ENCODE measurements at regions of chr7 and their contacts with region 1.

Region 1: DNA sequence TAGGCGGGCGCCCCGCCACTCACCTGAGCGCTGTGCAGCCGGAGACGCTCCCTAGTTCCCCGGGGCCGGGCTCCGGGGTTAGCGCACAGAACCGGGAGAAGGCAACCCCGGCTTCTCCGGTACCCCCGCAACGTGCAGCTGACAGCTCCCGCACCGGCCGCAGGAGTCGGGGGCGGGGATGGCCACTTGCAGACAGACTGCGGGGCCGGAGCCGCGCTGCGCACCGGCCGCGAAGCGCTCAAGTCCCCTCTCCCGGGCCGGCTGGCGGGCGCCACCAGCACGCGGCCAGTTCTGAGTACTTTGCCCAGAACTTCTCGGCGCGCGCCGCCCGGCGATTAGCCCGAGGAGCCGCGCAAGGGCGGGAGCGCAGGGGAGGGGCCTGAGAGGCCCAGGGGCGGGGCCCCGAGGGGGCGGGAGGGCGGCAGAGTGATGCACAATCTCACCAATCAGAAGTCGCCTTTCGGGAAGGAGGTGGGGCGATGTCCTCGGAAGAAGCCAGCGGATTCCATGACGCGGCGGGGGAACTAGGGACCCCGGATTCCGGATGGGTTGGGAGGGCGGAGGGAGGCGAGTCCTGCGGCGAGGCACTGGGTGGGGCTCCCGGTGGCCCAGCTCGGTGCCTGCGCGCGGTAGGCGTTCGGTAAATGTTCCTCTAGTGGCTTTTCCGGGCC is at the start of gene OSBPL3:
- DNase-seq: peak; percentile 96
- ATAC-seq: peak; percentile 89
- H3K4me3 ChIP-seq: peak within 1 kb of the TSS; percentile 73 to 97 (median 87)
- H3K4me3 Mint-ChIP-seq: peak within 1 kb of the TSS; percentile 95
- H3K27ac ChIP-seq: peak within 1 kb of the TSS; percentile 55 to 78
- H3K27ac Mint-ChIP-seq: peak within 1 kb of the TSS; percentile 96
- H3K4me1 ChIP-seq: peaks cover 17 to 27% of the 10 kb centered on the region in 2 donors
- H3K4me1 Mint-ChIP-seq: peaks cover 52% of the 10 kb centered on the region
- H3K27me3 ChIP-seq: no peaks in the 10 kb centered on the region
- H3K27me3 Mint-ChIP-seq: no peaks in the 10 kb centered on the region
- CTCF ChIP-seq: no peak
- total RNA-seq, gene OSBPL3: 67.6 and 80.6 TPM in 2 replicates

Region 2: GRCh38 chr7:24715661-24716479 is 264.1 kb before region 1 on chr7:
- CTCF ChIA-PET with region 1: no interaction called
- POLR2A ChIA-PET with region 1: no interaction called
- intact Hi-C with region 1: loop called (anchors 1 kb)
- DNase-seq: peak; percentile 56
- ATAC-seq: no peak
- H3K4me3 ChIP-seq: peak overlapping the region in 1 of 5 experiments; percentile 9
- H3K4me3 Mint-ChIP-seq: peak overlapping the region; percentile 68
- H3K27ac ChIP-seq: no peak overlapping the region
- H3K27ac Mint-ChIP-seq: no peak overlapping the region
- H3K4me1 ChIP-seq: peaks cover 52 to 55% of the 10 kb centered on the region in 2 donors
- H3K4me1 Mint-ChIP-seq: peaks cover 61% of the 10 kb centered on the region
- H3K27me3 ChIP-seq: no peaks in the 10 kb centered on the region
- H3K27me3 Mint-ChIP-seq: no peaks in the 10 kb centered on the region
- CTCF ChIP-seq: peak; percentile 56

Region 3: GRCh38 chr7:24842449-24843241 is 137.4 kb before region 1 on chr7:
- CTCF ChIA-PET with region 1: interaction called, 6 read pairs
- POLR2A ChIA-PET with region 1: interaction called, 12 read pairs
- intact Hi-C with region 1: no loop called
- DNase-seq: peak; percentile 72
- ATAC-seq: peak; percentile 78
- H3K4me3 ChIP-seq: peak overlapping the region in 1 of 5 experiments; percentile 15
- H3K4me3 Mint-ChIP-seq: peak overlapping the region; percentile 59
- H3K27ac ChIP-seq: peak overlapping the region; percentile 68 to 90
- H3K27ac Mint-ChIP-seq: peak overlapping the region; percentile 85
- H3K4me1 ChIP-seq: peaks cover 55 to 58% of the 10 kb centered on the region in 2 donors
- H3K4me1 Mint-ChIP-seq: peaks cover 53% of the 10 kb centered on the region
- H3K27me3 ChIP-seq: no peaks in the 10 kb centered on the region
- H3K27me3 Mint-ChIP-seq: no peaks in the 10 kb centered on the region
- CTCF ChIP-seq: no peak

Region 4: GRCh38 chr7:24911213-24911603 is 68.8 kb before region 1 on chr7:
- CTCF ChIA-PET with region 1: interaction called, 4 read pairs
- POLR2A ChIA-PET with region 1: no interaction called
- intact Hi-C with region 1: loop called (anchors 2 kb)
- DNase-seq: peak; percentile 40
- ATAC-seq: peak; percentile 69
- H3K4me3 ChIP-seq: peak overlapping the region in 1 of 5 experiments; percentile 21
- H3K4me3 Mint-ChIP-seq: peak overlapping the region; percentile 73
- H3K27ac ChIP-seq: peak overlapping the region in 1 of 2 donors; percentile 17
- H3K27ac Mint-ChIP-seq: no peak overlapping the region
- H3K4me1 ChIP-seq: peaks cover 33 to 36% of the 10 kb centered on the region in 2 donors
- H3K4me1 Mint-ChIP-seq: peaks cover 50% of the 10 kb centered on the region
- H3K27me3 ChIP-seq: no peaks in the 10 kb centered on the region
- H3K27me3 Mint-ChIP-seq: no peaks in the 10 kb centered on the region
- CTCF ChIP-seq: no peak

Region 5: GRCh38 chr7:25002786-25003185 is 22.8 kb after region 1 on chr7:
- CTCF ChIA-PET with region 1: no interaction called
- POLR2A ChIA-PET with region 1: no interaction called
- intact Hi-C with region 1: no loop called
- DNase-seq: no peak
- ATAC-seq: no peak
- H3K4me3 ChIP-seq: no peak overlapping the region
- H3K4me3 Mint-ChIP-seq: no peak overlapping the region
- H3K27ac ChIP-seq: no peak overlapping the region
- H3K27ac Mint-ChIP-seq: no peak overlapping the region
- H3K4me1 ChIP-seq: no peaks in the 10 kb centered on the region
- H3K4me1 Mint-ChIP-seq: peaks cover 4% of the 10 kb centered on the region
- H3K27me3 ChIP-seq: no peaks in the 10 kb centered on the region
- H3K27me3 Mint-ChIP-seq: peaks cover 10% of the 10 kb centered on the region
- CTCF ChIP-seq: no peak

Region 6: DNA sequence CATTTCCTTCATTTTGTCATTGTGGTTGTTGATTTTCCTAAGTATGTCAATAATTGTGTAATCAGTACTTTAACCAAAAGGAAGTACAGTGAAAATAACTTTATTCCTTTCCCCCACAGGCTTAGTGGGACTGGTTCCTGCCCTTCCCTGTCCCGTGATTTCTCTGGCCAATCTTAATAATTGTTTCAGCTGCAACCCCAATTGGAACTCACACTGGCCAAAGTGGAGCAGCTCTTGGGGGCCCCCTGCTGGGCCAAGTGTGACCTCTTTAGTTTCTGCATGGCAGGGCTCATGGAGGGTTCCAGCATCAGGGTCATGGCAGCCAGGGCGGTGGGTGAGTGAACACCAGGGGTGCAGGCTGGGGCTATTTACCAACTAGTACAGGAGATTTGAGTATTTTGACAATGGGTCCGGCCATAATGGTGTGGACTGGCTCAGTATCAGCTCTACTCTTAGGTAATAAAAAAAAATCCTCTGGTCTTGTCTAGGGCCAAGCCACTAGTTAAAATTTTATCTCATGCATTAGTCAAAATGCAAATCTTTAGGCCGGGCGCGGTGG is 113.3 kb after region 1 on chr7:
- CTCF ChIA-PET with region 1: interaction called, 11 read pairs
- POLR2A ChIA-PET with region 1: no interaction called
- intact Hi-C with region 1: loop called (anchors 10 kb)
- DNase-seq: peak; percentile 77
- ATAC-seq: peak; percentile 87
- H3K4me3 ChIP-seq: no peak overlapping the region
- H3K4me3 Mint-ChIP-seq: no peak overlapping the region
- H3K27ac ChIP-seq: no peak overlapping the region
- H3K27ac Mint-ChIP-seq: no peak overlapping the region
- H3K4me1 ChIP-seq: peaks cover 0 to 7% of the 10 kb centered on the region in 2 donors
- H3K4me1 Mint-ChIP-seq: peaks cover 6% of the 10 kb centered on the region
- H3K27me3 ChIP-seq: no peaks in the 10 kb centered on the region
- H3K27me3 Mint-ChIP-seq: no peaks in the 10 kb centered on the region
- CTCF ChIP-seq: peak; percentile 75

Region 7: GRCh38 chr7:25347360-25348066 is 367.5 kb after region 1 on chr7:
- CTCF ChIA-PET with region 1: no interaction called
- POLR2A ChIA-PET with region 1: no interaction called
- intact Hi-C with region 1: no loop called
- DNase-seq: no peak
- ATAC-seq: no peak
- H3K4me3 ChIP-seq: no peak overlapping the region
- H3K4me3 Mint-ChIP-seq: no peak overlapping the region
- H3K27ac ChIP-seq: no peak overlapping the region
- H3K27ac Mint-ChIP-seq: no peak overlapping the region
- H3K4me1 ChIP-seq: no peaks in the 10 kb centered on the region
- H3K4me1 Mint-ChIP-seq: no peaks in the 10 kb centered on the region
- H3K27me3 ChIP-seq: peaks cover 0 to 8% (median 0%) of the 10 kb centered on the region in 4 experiments
- H3K27me3 Mint-ChIP-seq: peaks cover 32% of the 10 kb centered on the region
- CTCF ChIP-seq: no peak

Region 8: DNA sequence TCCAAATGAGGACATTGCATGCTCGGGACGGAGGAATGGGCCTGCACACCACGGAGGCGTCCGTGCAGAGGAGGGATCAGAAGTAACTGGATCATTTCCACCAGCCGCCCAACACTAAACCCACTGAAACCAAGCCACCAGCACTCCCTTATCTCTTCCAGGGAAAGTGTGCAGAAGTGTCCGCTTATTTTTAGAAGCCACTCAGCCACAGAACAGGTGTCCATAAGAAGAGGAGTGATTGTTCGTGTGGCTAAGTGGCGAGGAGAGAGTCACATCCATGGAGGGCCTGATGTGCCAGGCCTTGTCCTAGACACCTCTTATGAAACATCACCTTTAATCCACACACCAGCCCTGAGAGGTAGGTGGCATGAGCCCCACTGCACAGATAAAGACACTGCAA is 656.2 kb after region 1 on chr7:
- CTCF ChIA-PET with region 1: no interaction called
- POLR2A ChIA-PET with region 1: no interaction called
- intact Hi-C with region 1: no loop called
- DNase-seq: no peak
- ATAC-seq: no peak
- H3K4me3 ChIP-seq: no peak overlapping the region
- H3K4me3 Mint-ChIP-seq: no peak overlapping the region
- H3K27ac ChIP-seq: no peak overlapping the region
- H3K27ac Mint-ChIP-seq: no peak overlapping the region
- H3K4me1 ChIP-seq: no peaks in the 10 kb centered on the region
- H3K4me1 Mint-ChIP-seq: no peaks in the 10 kb centered on the region
- H3K27me3 ChIP-seq: no peaks in the 10 kb centered on the region
- H3K27me3 Mint-ChIP-seq: no peaks in the 10 kb centered on the region
- CTCF ChIP-seq: no peak